ENCODE measurements at regions of chr12 and their contacts with region 1.

Region 1: DNA sequence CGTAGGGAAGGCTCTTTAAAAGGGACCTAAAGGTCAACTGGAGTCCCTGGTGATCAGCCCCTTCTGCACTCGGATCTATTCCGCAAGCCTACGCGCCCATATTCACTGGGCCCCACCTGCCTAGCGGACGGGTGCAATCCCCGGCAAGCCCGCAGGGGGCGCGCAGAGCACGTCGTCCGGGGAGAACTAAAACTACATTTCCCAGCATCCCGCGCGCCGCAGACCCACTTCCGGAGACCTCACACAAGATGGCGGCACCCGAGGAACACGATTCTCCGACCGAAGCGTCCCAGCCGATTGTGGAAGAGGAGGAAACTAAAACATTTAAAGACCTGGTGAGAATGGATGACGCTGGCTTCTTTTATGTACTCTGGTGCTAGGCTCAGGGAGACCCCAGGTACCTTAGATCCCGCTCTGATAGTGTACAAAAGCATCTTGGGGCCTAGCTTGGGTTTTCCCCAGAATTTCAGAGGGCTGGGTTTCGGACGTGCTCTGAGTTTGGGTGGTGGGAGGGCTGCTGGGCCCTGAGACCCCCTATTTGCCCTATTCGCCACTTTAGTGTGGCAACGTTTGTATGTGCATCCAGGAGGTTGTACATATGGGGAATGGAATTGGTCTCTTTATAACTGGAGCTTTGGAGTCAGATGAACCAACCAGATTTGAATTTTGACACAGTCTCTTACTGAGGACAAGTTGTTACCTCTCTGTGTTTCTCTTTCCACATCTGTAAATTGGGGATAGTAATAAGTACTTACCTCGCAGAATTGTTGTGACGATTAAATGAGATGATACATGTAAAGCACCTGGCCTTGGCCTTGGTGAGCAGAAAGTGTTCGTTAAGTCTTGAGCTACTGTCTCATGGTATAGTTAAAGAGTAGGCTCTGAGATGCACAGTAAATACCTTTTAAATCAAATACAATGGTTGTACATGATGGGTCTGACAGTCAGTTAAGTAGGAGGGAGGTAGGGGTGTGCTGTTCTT is at the start of gene DDX47:
- DNase-seq: peak; percentile 98
- total RNA-seq, gene DDX47: 25.5 TPM

Region 2: GRCh38 chr12:12881151-12881894 is 67.9 kb after region 1 on chr12:
- intact Hi-C with region 1: no loop called
- DNase-seq: no peak

Region 3: DNA sequence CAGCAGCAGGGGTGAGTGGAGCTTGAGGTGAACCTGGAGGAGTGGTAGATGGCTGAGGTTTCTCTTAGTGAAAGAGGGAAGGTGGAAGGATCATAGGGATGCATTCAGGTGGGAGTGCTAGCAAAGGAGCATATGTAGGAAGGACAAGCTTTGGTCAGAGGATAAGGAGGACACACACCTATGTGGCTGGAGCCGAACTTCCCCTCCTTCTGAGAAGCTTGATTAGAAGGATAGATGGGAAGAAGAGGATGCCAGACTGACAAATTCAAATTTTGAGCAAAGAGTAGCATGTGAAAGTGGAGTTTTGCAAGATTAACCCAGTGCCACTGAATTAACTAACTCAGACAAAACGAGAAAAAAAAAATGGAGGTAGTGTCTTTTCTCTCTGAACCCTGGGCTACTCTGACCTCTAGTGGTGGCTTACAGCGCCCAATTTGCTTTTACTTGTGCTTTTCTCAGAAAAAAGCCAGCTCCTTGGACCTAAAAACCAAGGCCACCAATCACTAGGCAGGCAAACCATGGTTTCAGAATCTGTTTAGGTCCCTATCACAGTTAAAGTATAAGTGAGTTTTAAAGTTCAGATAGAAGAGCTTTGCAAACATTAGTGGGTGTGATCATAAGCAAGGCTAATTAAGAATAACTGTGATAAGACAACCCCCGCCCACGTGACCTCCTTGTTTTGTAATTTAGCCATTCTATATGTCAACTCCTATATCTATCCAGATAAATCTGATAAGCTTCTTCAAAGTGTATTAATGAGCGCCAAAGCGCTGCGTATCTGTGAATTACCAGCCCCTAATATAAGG is 398.7 kb after region 1 on chr12:
- intact Hi-C with region 1: loop called (anchors 10 kb)
- DNase-seq: no peak

Measured in cardiac septum (tissue), 1 donor.